ENCODE measurements at regions of chr16 and their contacts with region 1.

Region 1: GRCh38 chr16:79770244-79771064 is 169.9 kb upstream of the MAF start:
- DNase-seq: peak; percentile 94
- H3K4me3 ChIP-seq: peak overlapping the region; percentile 61
- H3K4me3 Mint-ChIP-seq: peak overlapping the region; percentile 88
- H3K27ac Mint-ChIP-seq: peak overlapping the region; percentile 99
- H3K4me1 ChIP-seq: peaks cover 43% of the 10 kb centered on the region
- H3K4me1 Mint-ChIP-seq: peaks cover 35% of the 10 kb centered on the region
- H3K27me3 ChIP-seq: no peaks in the 10 kb centered on the region
- H3K27me3 Mint-ChIP-seq: no peaks in the 10 kb centered on the region
- CTCF ChIP-seq: peak in 1 of 2 experiments; percentile 26

Region 2: DNA sequence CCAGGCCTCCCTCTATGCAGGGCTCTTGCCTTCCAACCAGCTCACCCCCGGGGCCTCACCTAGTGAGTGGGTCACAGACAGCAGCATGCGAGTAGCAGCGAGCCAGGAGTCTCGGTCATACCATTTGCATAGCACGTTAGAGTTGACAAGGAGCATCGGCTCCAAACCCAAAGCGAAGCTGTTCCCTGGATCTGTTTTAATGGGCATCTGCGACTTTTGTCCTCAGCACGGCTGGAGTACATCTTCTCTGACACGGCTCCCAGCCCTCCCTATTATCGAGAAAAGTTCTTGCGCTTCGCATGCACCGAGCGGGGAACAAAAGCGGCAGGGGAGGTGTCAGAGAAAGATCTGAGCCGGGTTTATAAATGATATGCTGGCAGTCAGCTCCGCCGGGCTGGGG is 423.2 kb before region 1 on chr16:
- CTCF ChIA-PET with region 1: no interaction called
- POLR2A ChIA-PET with region 1: no interaction called
- intact Hi-C with region 1: no loop called
- DNase-seq: no peak
- H3K4me3 ChIP-seq: no peak overlapping the region
- H3K4me3 Mint-ChIP-seq: no peak overlapping the region
- H3K27ac Mint-ChIP-seq: no peak overlapping the region
- H3K4me1 ChIP-seq: no peaks in the 10 kb centered on the region
- H3K4me1 Mint-ChIP-seq: no peaks in the 10 kb centered on the region
- H3K27me3 ChIP-seq: no peaks in the 10 kb centered on the region
- H3K27me3 Mint-ChIP-seq: peaks cover 12% of the 10 kb centered on the region
- CTCF ChIP-seq: no peak

Region 3: DNA sequence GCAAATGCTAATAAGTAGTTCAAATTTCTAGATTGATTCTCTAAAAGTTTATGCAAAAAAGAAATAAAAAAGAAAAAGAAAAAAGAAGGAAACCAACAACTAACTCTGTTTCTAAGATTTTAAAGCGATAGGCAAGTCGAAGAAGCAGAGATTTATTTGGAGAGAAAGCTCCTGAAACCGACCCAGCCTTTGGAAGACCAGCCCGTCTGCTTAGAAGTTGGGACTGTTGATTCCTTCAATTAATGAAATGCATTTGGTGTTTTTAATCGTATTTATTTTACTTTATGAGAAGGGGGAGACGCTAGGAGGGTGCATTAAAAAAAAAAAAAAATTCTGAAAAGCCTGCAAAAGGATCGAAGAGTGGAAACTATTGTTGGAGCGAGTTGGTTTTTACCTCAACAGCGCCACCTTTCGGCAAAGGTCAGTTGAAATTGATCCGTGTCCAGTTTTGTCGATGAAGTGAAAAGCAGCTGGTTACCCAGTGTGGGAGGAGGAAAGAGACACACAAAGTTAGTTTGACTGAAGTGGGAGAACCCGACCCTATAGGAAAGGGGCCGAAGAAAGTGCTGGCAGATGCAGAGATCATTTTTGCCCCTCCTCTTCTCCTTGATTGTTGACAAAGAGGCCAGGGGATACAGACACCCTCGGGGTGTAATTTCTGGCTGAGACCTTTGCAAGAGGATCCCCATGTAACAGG is 168.4 kb before region 1 on chr16:
- CTCF ChIA-PET with region 1: interaction called, 6 read pairs
- POLR2A ChIA-PET with region 1: no interaction called
- intact Hi-C with region 1: loop called (anchors 2 kb)
- DNase-seq: peak; percentile 77 to 83
- H3K4me3 ChIP-seq: peak overlapping the region; percentile 56
- H3K4me3 Mint-ChIP-seq: peak overlapping the region; percentile 96
- H3K27ac Mint-ChIP-seq: no peak overlapping the region
- H3K4me1 ChIP-seq: peaks cover 9% of the 10 kb centered on the region
- H3K4me1 Mint-ChIP-seq: peaks cover 6% of the 10 kb centered on the region
- H3K27me3 ChIP-seq: peaks cover 6% of the 10 kb centered on the region
- H3K27me3 Mint-ChIP-seq: peaks cover 25% of the 10 kb centered on the region
- CTCF ChIP-seq: peak; percentile 84 to 93

Region 4: GRCh38 chr16:79784007-79784406 is 13.6 kb after region 1 on chr16:
- CTCF ChIA-PET with region 1: no interaction called
- POLR2A ChIA-PET with region 1: no interaction called
- intact Hi-C with region 1: no loop called
- DNase-seq: no peak
- H3K4me3 ChIP-seq: no peak overlapping the region
- H3K4me3 Mint-ChIP-seq: no peak overlapping the region
- H3K27ac Mint-ChIP-seq: no peak overlapping the region
- H3K4me1 ChIP-seq: 0 out of 2 replicates have a peak, but pooled peaks cover 12% of the 10 kb centered on the region
- H3K4me1 Mint-ChIP-seq: no peaks in the 10 kb centered on the region
- H3K27me3 ChIP-seq: no peaks in the 10 kb centered on the region
- H3K27me3 Mint-ChIP-seq: no peaks in the 10 kb centered on the region
- CTCF ChIP-seq: no peak

Region 5: GRCh38 chr16:79897453-79898146 is 127.1 kb after region 1 on chr16:
- CTCF ChIA-PET with region 1: no interaction called
- POLR2A ChIA-PET with region 1: no interaction called
- intact Hi-C with region 1: loop called (anchors 2 kb)
- DNase-seq: peak; percentile 65 to 87
- H3K4me3 ChIP-seq: no peak overlapping the region
- H3K4me3 Mint-ChIP-seq: peak overlapping the region; percentile 2
- H3K27ac Mint-ChIP-seq: peak overlapping the region; percentile 39
- H3K4me1 ChIP-seq: peaks cover 53% of the 10 kb centered on the region
- H3K4me1 Mint-ChIP-seq: peaks cover 46% of the 10 kb centered on the region
- H3K27me3 ChIP-seq: no peaks in the 10 kb centered on the region
- H3K27me3 Mint-ChIP-seq: no peaks in the 10 kb centered on the region
- CTCF ChIP-seq: no peak

Region 6: GRCh38 chr16:80084685-80085084 is 314.2 kb after region 1 on chr16:
- CTCF ChIA-PET with region 1: interaction called, 16 read pairs
- POLR2A ChIA-PET with region 1: no interaction called
- intact Hi-C with region 1: loop called (anchors 1 kb)
- DNase-seq: peak; percentile 69 to 74
- H3K4me3 ChIP-seq: no peak overlapping the region
- H3K4me3 Mint-ChIP-seq: no peak overlapping the region
- H3K27ac Mint-ChIP-seq: no peak overlapping the region
- H3K4me1 ChIP-seq: peaks cover 26% of the 10 kb centered on the region
- H3K4me1 Mint-ChIP-seq: peaks cover 26% of the 10 kb centered on the region
- H3K27me3 ChIP-seq: no peaks in the 10 kb centered on the region
- H3K27me3 Mint-ChIP-seq: no peaks in the 10 kb centered on the region
- CTCF ChIP-seq: peak; percentile 73 to 75

Region 7: DNA sequence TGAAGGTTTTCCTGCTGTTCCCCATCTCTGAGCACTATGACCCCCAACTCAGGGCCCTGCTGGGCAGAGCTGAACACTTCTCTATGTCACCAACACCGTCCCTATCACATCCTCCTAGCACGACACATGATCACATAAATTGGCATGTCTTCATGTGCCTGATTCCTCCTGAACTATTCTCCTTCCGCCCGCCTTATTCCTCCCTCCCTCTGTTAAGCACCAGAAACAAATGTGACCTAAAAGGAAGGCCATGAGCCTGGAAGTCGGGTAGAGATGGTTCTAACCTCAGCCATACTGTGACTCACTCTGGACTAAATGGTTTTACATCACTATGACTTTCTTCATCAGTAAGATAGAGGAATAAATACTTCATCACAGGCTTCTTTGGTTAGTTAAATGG is 689.5 kb after region 1 on chr16:
- CTCF ChIA-PET with region 1: no interaction called
- POLR2A ChIA-PET with region 1: no interaction called
- intact Hi-C with region 1: loop called (anchors 5 kb)
- DNase-seq: no peak
- H3K4me3 ChIP-seq: no peak overlapping the region
- H3K4me3 Mint-ChIP-seq: no peak overlapping the region
- H3K27ac Mint-ChIP-seq: no peak overlapping the region
- H3K4me1 ChIP-seq: peaks cover 25% of the 10 kb centered on the region
- H3K4me1 Mint-ChIP-seq: peaks cover 24% of the 10 kb centered on the region
- H3K27me3 ChIP-seq: no peaks in the 10 kb centered on the region
- H3K27me3 Mint-ChIP-seq: no peaks in the 10 kb centered on the region
- CTCF ChIP-seq: no peak

Measured in Caco-2 (cell line).